Activated T-helper 2 cell treated with anti-CD3 and anti-CD28 coated beads, Interferon-gamma antibody, Interleukin-2, Interleukin-4, amounts not matched to agents 10 μg/mL and 5 μg/mL and 100 μg/mL, durations not matched to agents 14 hours and 24 hours and 36 hours (primary cell): ENCODE measurements at regions of chr1 and their contacts with region 1.

Region 1: DNA sequence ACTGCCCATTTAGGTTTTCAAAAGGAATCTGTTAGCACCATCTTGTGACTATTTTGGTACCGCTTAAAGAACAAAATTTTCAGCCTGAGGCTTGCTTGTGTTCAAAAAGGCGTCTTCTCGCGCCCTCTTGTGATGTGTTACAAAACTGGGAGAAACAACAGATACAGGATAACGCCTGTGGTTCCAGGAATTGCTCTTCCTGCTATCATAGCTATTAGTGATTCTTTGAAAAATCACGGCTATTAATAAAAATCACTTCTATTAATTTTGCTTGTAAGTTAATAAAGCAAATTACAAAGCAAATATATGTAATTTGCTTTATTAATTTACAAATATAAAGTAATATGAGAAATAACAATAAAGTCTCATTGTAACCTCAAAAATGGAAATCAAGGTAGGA is 82.2 kb upstream of the ABCD3 start:
- DNase-seq: no peak
- H3K4me3 Mint-ChIP-seq: no peak overlapping the region
- H3K27ac Mint-ChIP-seq: no peak overlapping the region
- H3K4me1 Mint-ChIP-seq: peaks cover 2% of the 10 kb centered on the region
- H3K27me3 Mint-ChIP-seq: peaks cover 3% of the 10 kb centered on the region

Region 2: GRCh38 chr1:94039514-94039870 is 296.5 kb before region 1 on chr1:
- intact Hi-C with region 1: loop called (anchors 5 kb)
- DNase-seq: peak; percentile 24
- H3K4me3 Mint-ChIP-seq: no peak overlapping the region
- H3K27ac Mint-ChIP-seq: no peak overlapping the region
- H3K4me1 Mint-ChIP-seq: peaks cover 9% of the 10 kb centered on the region
- H3K27me3 Mint-ChIP-seq: peaks cover 18% of the 10 kb centered on the region

Region 3: DNA sequence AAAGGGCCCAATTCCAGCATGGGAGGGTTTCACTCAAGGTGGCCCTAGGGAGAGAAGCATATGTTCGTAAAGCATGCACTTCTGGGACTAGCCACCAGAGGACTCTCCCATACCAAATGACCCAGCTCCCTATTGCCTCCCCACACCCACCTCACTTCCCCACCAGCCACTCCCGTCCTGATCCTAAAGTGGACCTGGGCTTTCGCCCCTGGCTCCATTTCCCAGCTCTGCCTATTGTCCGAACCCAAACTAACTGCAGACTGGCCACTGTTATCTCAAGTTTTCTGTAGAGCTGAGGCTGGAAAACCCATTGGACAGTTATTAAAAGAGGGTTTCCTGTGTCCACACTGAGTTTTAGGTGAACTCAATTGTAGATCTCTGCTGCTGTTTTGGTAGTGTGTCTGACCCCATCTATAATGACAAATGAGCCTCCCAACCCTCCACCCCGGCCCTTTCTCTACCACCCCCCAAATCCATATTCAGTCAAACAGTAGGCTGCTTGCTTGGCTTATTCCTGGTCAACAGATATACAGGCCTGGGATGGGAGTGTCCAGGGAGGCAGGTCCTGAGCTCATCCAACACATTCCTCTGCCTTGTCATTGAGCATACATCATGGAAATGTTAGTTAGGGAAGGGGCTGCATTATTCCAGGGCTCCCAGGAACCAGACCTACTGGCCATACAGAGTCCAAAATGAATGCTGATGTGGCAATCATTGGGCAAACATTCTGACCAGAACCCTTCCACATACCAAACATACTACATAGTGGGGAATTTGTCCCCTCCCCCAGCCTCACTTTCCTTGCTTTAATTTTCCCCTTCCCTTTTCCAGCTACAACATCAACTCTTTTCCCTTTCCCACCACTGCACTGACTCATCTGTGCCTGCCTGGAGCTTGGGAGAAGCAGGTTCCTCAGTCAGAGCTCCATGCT is 274.2 kb before region 1 on chr1:
- intact Hi-C with region 1: loop called (anchors 2 kb)
- DNase-seq: no peak
- H3K4me3 Mint-ChIP-seq: no peak overlapping the region
- H3K27ac Mint-ChIP-seq: no peak overlapping the region
- H3K4me1 Mint-ChIP-seq: no peaks in the 10 kb centered on the region
- H3K27me3 Mint-ChIP-seq: peaks cover 15% of the 10 kb centered on the region